Aorta (tissue), 5 donors: ENCODE measurements at regions of chr9 and their contacts with region 1.

Region 1: DNA sequence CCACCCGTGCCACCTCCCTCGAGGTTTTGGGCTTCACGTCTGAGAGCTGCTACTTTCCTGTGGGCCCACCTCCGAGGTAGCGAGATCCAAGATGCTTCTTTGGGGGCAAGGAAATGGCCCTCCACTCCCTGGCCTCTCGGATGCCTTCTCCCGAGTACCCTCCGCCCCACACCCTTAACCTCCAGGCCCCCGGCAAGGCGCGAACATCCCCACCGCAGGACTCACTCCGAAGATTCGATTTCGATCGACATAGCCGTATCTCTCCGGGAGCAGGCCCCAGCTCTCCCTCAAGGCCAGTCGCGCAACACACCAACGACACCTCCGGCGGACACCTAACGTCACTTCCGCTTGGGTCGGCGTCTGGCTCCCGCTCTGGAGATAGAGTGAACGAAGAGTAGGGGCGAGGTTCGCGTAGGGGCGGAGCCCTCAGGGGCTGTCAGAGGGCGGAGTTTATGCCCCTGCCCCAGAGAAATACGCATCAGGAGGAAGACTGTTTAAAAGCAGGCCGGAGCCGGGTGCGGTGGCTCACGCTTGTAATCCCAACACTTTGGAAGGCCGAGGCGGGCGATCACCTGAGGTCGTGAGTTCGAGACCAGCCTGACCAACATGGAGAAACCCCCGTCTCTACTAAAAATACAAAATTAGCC is at the start of gene SMU1:
- DNase-seq: peak; percentile 99
- ATAC-seq: peak; percentile 98
- H3K4me3 ChIP-seq: peak within 1 kb of the TSS; percentile 39 to 70
- H3K27ac ChIP-seq: peak within 1 kb of the TSS; percentile 63 to 94
- H3K4me1 ChIP-seq: no peaks in the 10 kb centered on the region
- H3K27me3 ChIP-seq: no peaks in the 10 kb centered on the region
- total RNA-seq, gene SMU1: 15.8 to 18.7 TPM

Region 2: DNA sequence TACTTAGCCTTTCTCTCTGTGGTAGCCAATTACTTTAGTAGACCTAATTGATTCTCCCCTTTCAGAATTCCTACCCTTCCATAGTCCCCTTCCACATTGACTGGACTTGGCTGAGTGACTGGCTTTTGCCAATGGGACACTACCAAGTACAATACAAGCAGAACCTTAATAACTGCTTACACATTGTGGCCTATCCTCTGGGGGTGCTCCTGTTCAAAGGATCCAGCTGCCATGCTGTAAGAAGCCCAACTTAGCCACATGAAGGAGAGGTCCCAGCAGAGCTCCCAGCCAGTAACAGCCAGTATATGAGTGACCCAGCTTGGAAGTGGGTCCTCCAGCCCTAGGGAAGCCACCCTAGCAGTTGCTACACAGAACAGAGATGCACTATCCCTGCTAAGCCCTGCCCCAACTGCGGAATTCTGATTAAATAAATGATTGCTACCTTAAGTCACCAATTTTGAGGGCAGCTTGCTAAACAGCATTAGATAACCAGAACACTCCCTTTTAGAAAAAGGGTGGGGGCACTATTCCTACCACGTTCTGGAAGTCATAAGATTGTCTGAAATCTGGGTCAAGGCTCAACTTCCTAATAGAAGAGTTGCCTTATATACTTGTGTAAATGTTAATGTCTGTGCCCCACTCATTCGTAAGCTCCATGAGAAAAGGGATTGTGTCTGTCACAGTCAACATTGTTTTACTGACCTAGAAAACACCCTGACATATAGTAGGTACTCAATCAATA is 64.0 kb before region 1 on chr9:
- intact Hi-C with region 1: no loop called
- DNase-seq: no peak
- ATAC-seq: no peak
- H3K4me3 ChIP-seq: no peak overlapping the region
- H3K27ac ChIP-seq: no peak overlapping the region
- H3K4me1 ChIP-seq: no peaks in the 10 kb centered on the region
- H3K27me3 ChIP-seq: no peaks in the 10 kb centered on the region

Region 3: DNA sequence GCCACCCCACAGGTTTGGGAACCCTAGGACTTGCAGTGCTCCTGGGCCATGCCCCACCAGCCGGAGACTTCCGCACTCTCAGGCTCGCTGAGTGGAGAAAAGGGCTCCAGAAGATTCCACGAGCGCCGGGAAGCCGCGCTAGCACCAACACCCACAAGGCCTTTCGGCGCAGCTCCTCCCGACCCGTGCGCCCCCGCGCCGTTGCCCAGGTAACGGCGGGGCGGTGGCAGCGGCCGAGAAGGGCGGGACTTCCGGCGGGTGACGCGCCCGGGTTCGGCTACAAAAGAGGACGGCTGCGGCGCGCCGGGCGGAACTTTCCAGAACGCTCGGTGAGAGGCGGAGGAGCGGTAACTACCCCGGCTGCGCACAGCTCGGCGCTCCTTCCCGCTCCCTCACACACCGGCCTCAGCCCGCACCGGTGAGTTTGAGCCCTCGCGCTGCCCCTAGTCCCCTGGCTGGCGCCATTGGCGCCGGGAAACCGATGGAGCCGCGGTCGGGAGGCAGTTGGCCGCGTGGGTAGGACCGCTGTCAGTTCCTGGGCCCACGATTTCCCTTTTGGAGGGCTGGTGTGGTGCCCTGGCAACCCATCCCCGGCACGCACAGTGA is 51.4 kb before region 1 on chr9 and contains the start of gene DNAJA1:
- intact Hi-C with region 1: loop called in 1 of 2 experiments (anchors 5 kb)
- DNase-seq: peak; percentile 96 to 97
- ATAC-seq: peak; percentile 99
- H3K4me3 ChIP-seq: peak within 1 kb of the TSS; percentile 90 to 97
- H3K27ac ChIP-seq: peak within 1 kb of the TSS; percentile 83 to 95
- H3K4me1 ChIP-seq: peaks cover 0 to 12% of the 10 kb centered on the region in 2 donors
- H3K27me3 ChIP-seq: no peaks in the 10 kb centered on the region
- total RNA-seq, gene DNAJA1: 89.8 to 101 TPM

Region 4: GRCh38 chr9:33167046-33167808 is 90.7 kb after region 1 on chr9 and contains the start of gene B4GALT1:
- intact Hi-C with region 1: loop called in 1 of 2 experiments (anchors 2 kb)
- DNase-seq: peak; percentile 97 to 99
- ATAC-seq: peak; percentile 88
- H3K4me3 ChIP-seq: peak within 1 kb of the TSS; percentile 92
- H3K27ac ChIP-seq: peak within 1 kb of the TSS; percentile 32 to 95
- H3K4me1 ChIP-seq: peaks cover 0 to 17% of the 10 kb centered on the region in 2 donors
- H3K27me3 ChIP-seq: no peaks in the 10 kb centered on the region
- total RNA-seq, gene B4GALT1: 74.5 to 95.6 TPM

Region 5: GRCh38 chr9:33225319-33226149 is 149.1 kb after region 1 on chr9:
- intact Hi-C with region 1: loop called (anchors 1 kb)
- DNase-seq: no peak
- ATAC-seq: peak; percentile 72
- H3K4me3 ChIP-seq: no peak overlapping the region
- H3K27ac ChIP-seq: no peak overlapping the region
- H3K4me1 ChIP-seq: no peaks in the 10 kb centered on the region
- H3K27me3 ChIP-seq: no peaks in the 10 kb centered on the region